Activated naive CD4-positive, alpha-beta T cell treated with anti-CD3 and anti-CD28 coated beads for 36 hours (primary cell): ENCODE measurements at regions of chr4 and their contacts with region 1.

Region 1: GRCh38 chr4:184649026-184649970 is at the starts of genes CASP3 and PRIMPOL:
- DNase-seq: peak; percentile 97
- H3K4me3 Mint-ChIP-seq: peak within 1 kb of the TSS; percentile 93
- H3K27ac Mint-ChIP-seq: peak within 1 kb of the TSS; percentile 90
- H3K4me1 Mint-ChIP-seq: peaks cover 50% of the 10 kb centered on the region
- H3K27me3 Mint-ChIP-seq: no peaks in the 10 kb centered on the region
- total RNA-seq, gene CASP3: 27.5 to 27.9 TPM
- total RNA-seq, gene PRIMPOL: 17.9 to 18.1 TPM

Region 2: GRCh38 chr4:183504064-183504929 is 1145.0 kb before region 1 on chr4:
- CTCF ChIA-PET with region 1: no interaction called
- intact Hi-C with region 1: loop called (anchors 2 kb)
- DNase-seq: peak; percentile 98
- H3K4me3 Mint-ChIP-seq: peak overlapping the region; percentile 91
- H3K27ac Mint-ChIP-seq: peak overlapping the region; percentile 93
- H3K4me1 Mint-ChIP-seq: peaks cover 39% of the 10 kb centered on the region
- H3K27me3 Mint-ChIP-seq: no peaks in the 10 kb centered on the region

Region 3: DNA sequence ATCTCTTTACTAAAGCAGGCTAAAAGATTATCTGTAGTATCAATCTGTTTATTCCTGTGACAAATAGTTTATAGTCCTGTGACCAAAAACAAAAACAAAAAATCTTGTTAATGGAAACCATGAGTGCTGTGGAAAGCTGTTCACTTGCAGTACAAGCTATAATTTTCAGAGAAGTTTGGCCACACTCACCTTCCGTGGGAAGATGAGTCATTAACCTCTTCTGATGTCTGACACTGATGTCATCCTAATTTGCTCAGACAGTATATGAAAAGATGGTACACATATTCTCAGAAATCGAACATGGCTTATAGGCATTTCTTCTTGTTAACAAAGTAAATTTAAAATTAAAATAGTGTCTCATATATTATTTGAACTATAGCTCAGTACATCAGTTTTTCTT is 411.7 kb before region 1 on chr4:
- CTCF ChIA-PET with region 1: no interaction called
- intact Hi-C with region 1: loop called (anchors 1 kb)
- DNase-seq: peak; percentile 84
- H3K4me3 Mint-ChIP-seq: peak overlapping the region; percentile 32
- H3K27ac Mint-ChIP-seq: peak overlapping the region; percentile 93
- H3K4me1 Mint-ChIP-seq: peaks cover 40% of the 10 kb centered on the region
- H3K27me3 Mint-ChIP-seq: no peaks in the 10 kb centered on the region

Region 4: GRCh38 chr4:184318852-184319251 is 330.4 kb before region 1 on chr4:
- CTCF ChIA-PET with region 1: no interaction called
- intact Hi-C with region 1: loop called (anchors 5 kb)
- DNase-seq: no peak
- H3K4me3 Mint-ChIP-seq: no peak overlapping the region
- H3K27ac Mint-ChIP-seq: no peak overlapping the region
- H3K4me1 Mint-ChIP-seq: peaks cover 36% of the 10 kb centered on the region
- H3K27me3 Mint-ChIP-seq: peaks cover 2% of the 10 kb centered on the region

Region 5: GRCh38 chr4:184514121-184514988 is 134.9 kb before region 1 on chr4:
- CTCF ChIA-PET with region 1: no interaction called
- intact Hi-C with region 1: loop called (anchors 1 kb)
- DNase-seq: peak; percentile 86
- H3K4me3 Mint-ChIP-seq: peak overlapping the region; percentile 23
- H3K27ac Mint-ChIP-seq: peak overlapping the region; percentile 66
- H3K4me1 Mint-ChIP-seq: peaks cover 35% of the 10 kb centered on the region
- H3K27me3 Mint-ChIP-seq: no peaks in the 10 kb centered on the region

Region 6: DNA sequence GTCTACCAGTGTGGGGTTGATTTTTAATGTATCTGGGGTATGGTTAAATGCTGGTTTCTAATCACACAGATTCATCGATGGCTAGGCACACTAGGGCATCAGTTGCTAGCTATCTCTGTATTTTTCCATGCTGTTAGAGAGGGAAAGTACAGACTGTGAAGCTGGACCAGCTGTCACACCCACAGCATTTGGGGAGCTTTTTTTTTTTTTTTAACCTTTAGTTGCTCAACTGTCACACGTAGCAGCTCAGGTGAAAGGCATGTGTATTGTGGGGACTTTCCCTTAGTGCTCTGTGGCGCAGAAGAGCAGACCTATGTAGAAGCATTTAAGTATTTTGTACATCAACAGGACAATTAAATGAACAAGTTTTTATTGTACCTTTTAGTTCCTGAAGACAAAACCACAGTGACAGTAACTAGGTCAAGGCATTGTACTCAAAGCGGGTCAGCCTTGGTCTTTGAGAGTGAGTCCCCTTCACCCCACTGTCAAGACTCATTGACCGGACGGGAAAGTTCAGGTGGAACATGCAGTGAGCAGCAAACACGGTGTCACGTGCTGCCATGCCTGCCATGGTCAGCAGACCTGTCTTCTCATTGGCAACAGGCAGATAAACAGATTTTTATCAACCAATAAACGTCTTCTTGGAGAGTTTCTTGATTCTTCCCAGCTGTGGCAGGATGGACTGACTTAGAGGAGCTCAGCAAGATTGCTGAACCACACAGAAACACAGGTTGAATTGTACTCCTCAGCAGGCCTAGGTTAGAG is 65.4 kb before region 1 on chr4:
- CTCF ChIA-PET with region 1: no interaction called
- intact Hi-C with region 1: loop called (anchors 2 kb)
- DNase-seq: peak; percentile 62
- H3K4me3 Mint-ChIP-seq: no peak overlapping the region
- H3K27ac Mint-ChIP-seq: peak overlapping the region; percentile 20
- H3K4me1 Mint-ChIP-seq: peaks cover 25% of the 10 kb centered on the region
- H3K27me3 Mint-ChIP-seq: no peaks in the 10 kb centered on the region

Region 7: DNA sequence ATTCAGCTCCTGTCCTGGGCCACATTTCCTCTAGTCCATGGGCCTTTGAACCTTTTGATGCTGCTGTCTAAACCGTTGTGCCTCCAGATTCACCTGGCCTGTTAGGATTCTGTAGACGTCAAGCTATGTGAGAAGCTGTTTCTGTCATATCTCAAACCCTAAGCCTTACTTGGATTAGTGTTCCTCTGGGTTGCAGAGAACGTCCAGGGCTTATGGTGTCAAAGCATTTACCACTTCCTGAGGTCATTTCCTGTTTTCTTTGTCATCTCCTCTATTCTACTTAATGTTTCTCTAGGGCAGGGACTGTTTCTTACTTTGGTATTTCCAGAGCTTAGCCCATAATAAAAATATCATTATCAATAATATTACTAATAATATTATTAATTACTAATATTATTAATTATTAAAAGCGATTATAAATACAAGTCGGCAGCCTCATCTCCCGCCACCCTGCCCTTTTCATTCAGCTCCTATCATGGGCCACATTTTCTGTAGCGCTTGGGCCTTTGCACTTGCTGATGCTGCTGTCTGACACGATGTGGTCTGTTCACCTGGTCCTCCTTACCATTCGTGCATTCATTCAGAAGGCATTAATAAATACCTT is 19.3 kb after region 1 on chr4:
- CTCF ChIA-PET with region 1: no interaction called
- intact Hi-C with region 1: no loop called
- DNase-seq: no peak
- H3K4me3 Mint-ChIP-seq: no peak overlapping the region
- H3K27ac Mint-ChIP-seq: no peak overlapping the region
- H3K4me1 Mint-ChIP-seq: peaks cover 10% of the 10 kb centered on the region
- H3K27me3 Mint-ChIP-seq: no peaks in the 10 kb centered on the region

Region 8: DNA sequence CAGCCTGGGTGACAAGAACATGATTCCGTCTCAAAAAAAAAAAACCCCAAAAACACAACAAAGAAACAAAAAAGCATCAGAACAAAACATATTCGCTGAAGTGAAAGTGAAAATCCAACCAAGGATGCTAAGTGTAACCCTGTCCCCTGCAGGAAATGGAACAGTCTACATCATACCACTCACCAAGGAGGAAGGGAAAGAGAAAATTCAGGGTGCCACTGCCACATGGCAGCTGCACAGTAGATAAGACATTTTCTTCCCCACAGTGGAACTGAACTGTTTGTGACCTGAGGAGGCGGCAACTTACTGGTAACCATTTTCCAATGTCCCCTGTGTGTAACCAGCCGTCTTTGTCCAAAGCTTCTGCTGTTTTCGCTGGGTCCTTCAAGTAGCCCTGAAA is 112.8 kb after region 1 on chr4:
- CTCF ChIA-PET with region 1: no interaction called
- intact Hi-C with region 1: loop called (anchors 1 kb)
- DNase-seq: peak; percentile 56
- H3K4me3 Mint-ChIP-seq: peak overlapping the region; percentile 24
- H3K27ac Mint-ChIP-seq: peak overlapping the region; percentile 83
- H3K4me1 Mint-ChIP-seq: peaks cover 22% of the 10 kb centered on the region
- H3K27me3 Mint-ChIP-seq: no peaks in the 10 kb centered on the region